GM12878 (cell line): ENCODE measurements at regions of chr7 and their contacts with region 1.

Region 1: GRCh38 chr7:2771274-2771731 is 72.8 kb downstream of the GNA12 start:
- DNase-seq: no peak
- ATAC-seq: no peak
- H3K4me3 ChIP-seq: no peak overlapping the region
- H3K27ac ChIP-seq: no peak overlapping the region
- H3K4me1 ChIP-seq: peaks cover 10% of the 10 kb centered on the region
- H3K27me3 ChIP-seq: no peaks in the 10 kb centered on the region
- CTCF ChIP-seq: no peak
- EP300 ChIP-seq: no peak
- POLR2A ChIP-seq: no peak
- RAD21 ChIP-seq: no peak

Region 2: DNA sequence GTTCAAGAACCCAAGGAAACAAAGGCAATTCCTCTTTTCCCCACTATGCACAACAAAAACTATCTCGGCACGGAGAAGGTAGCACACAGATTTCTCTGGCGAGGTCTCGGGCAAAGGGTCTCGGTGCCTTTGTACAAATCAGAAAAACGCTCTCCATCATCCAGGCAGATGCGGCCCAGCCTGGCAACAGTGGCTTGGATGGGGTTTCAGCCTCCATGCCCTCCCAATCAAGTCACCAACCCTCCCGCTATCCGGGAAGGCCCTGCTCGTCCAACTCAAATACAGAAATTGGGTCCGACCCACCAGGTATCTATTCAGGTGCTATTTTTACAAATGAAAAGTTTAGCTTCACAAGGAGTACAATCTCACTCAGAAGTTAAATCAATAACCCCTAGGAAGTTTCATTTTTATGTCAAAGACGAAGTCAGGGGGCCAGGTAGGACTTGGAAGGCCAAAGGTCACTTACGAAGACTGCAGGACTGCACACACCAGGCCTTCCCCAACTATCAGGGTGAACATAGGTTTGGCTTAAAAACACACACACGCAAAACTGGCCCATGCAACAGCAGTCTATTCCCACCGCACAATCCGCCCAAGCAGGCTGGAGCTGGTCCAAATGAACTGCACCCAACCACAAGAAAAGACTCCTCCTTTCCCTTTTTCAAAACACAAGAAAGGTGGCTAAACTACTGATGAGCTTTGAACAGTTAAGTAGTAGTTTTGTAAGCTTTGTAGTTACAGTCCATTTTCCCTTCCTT is 29.8 kb after region 1 on chr7:
- CTCF ChIA-PET with region 1: no interaction called
- POLR2A ChIA-PET with region 1: interaction called, 6 read pairs
- RAD21 ChIA-PET with region 1: no interaction called
- SMC1A ChIA-PET with region 1: interaction called, 11 read pairs
- in situ Hi-C with region 1: no loop called
- intact Hi-C with region 1: no loop called
- DNase-seq: no peak
- ATAC-seq: peak; percentile 45
- H3K4me3 ChIP-seq: no peak overlapping the region
- H3K27ac ChIP-seq: no peak overlapping the region
- H3K4me1 ChIP-seq: peaks cover 8% of the 10 kb centered on the region; the same call in 1 of the 2 replicates
- H3K27me3 ChIP-seq: no peaks in the 10 kb centered on the region
- CTCF ChIP-seq: no peak
- EP300 ChIP-seq: no peak
- POLR2A ChIP-seq: no peak
- RAD21 ChIP-seq: no peak